ENCODE measurements at regions of chr3 and their contacts with region 1.

Region 1: DNA sequence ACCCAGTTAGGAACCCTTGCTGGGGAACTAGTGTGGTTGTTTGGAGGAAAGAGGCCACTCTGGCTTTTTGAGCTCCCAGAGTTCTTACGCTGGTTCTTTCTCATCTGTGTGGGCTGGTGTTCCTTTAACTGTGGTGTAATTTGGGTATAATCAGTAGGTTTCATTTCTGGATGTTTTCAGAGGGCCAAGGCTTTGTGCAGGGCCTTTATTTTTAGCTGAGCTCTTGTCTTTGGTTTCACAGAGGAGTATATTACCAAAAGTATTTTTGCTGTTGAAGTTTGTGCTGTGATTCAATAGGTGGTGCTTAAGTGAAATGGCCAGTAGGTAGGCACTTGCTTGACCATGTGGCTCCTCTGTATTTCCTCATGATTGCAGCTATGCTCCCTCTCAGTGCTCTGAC is 357.9 kb downstream of the KCNH8 start:
- DNase-seq: no peak
- H3K4me3 ChIP-seq: no peak overlapping the region
- H3K27ac ChIP-seq: no peak overlapping the region
- H3K4me1 ChIP-seq: no peaks in the 10 kb centered on the region
- H3K27me3 ChIP-seq: no peaks in the 10 kb centered on the region
- CTCF ChIP-seq: no peak

Region 2: GRCh38 chr3:19083808-19084207 is 422.4 kb before region 1 on chr3:
- intact Hi-C with region 1: no loop called
- DNase-seq: no peak
- H3K4me3 ChIP-seq: no peak overlapping the region
- H3K27ac ChIP-seq: no peak overlapping the region
- H3K4me1 ChIP-seq: no peaks in the 10 kb centered on the region
- H3K27me3 ChIP-seq: no peaks in the 10 kb centered on the region
- CTCF ChIP-seq: no peak

Region 3: DNA sequence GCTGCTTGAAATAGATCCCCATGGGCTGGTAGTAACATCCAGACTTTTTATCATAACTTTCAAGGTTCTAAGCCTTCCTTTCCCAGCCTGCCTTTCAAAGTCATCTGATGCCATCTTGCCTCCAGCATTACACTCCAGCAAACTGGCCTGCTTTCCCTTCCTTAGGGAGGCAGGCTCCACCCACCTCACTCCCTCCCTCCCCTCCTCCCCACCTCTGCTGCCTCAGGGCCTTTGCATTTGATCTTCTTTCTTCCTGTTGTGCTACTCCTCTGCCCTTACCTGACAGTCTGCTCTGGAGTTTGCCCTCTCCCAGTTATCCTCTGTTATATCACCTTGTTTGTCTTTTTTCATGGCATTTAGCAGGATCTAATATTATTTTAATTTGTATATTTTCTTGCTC is 38.4 kb before region 1 on chr3:
- intact Hi-C with region 1: loop called (anchors 2 kb)
- DNase-seq: no peak
- H3K4me3 ChIP-seq: no peak overlapping the region
- H3K27ac ChIP-seq: no peak overlapping the region
- H3K4me1 ChIP-seq: no peaks in the 10 kb centered on the region
- H3K27me3 ChIP-seq: no peaks in the 10 kb centered on the region
- CTCF ChIP-seq: no peak